ENCODE measurements at regions of chr19 and their contacts with region 1.

Region 1: DNA sequence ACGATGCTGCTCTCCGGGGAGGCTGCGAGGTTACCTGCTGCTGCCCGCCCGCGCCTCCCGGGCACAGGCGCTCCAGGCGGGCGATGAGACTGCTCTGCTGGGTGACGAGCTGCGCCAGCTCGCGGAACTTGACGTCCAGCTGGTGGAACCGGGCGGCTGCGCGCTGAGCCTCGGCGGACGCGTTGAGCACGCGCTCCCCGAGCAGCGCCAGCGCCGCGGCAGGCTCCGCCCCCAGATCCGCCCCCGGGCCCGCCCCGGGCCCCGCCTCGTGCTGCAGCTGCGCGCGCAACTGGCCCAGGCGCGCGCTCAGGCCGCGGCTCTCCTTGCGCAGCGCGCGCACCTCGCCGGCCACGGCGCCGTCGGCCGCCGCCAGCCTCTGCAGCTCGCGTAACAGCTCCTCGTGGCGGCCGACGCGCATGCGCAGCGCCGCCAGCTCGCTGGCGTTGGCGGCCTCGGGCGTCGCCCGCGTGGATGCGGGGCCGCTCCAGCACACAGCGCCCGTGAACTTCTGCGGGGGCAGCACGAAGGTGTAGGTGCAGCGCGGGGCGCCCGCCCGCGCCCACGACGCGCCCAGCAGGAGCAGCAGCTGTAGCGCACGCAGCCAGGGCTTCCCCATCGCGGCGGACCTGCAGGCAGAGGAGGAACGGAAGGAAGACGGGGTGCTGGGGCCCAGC is 6.4 kb downstream of the ANGPTL6 start:
- DNase-seq: peak; percentile 73
- H3K4me3 ChIP-seq: peak overlapping the region; percentile 36 to 57 (median 49)
- H3K27ac ChIP-seq: no peak overlapping the region
- H3K4me1 ChIP-seq: peaks cover 8% of the 10 kb centered on the region
- H3K27me3 ChIP-seq: no peaks in the 10 kb centered on the region
- CTCF ChIP-seq: no peak

Region 2: DNA sequence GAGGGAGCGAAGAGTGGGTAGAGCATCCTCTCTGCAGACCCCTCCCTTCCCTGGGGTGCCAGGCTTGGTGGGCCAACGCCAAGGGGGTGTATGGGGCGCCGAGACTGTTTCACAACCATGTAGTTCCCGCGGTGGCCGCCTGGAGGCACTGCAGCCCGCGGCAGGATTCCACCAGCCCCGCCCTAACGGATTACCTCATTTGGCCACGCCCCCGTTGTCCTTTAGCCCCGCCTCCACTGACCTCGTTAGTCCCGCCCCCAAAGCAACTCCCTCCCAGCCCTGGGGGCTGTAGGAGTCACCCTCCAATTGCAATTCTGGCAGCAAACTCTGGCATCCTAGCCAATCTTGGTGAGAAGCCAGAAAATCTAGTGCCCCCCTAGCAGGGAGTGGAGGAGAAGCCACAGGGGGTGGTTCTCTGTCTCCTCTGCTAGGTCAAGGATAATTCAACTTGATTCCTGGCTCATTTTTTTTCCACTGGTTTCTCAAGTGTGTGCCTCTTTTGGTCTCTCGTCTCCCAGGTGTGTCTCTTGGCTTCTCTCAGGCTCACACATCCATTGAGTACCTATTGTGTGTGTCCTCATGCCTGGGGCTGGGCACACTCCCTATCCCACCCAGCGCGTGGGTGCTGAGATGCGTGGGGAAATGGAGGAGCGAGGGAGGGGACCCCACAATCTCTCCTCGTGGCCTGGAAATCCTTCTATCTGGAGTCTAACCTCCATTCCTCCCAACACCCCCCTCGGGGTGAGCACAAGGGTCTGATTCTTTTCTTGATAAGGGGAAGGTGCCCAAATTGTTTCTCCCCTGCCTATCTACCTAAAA is 161.7 kb before region 1 on chr19:
- dilution Hi-C with region 1: loop called (anchors 25 kb)
- DNase-seq: no peak
- H3K4me3 ChIP-seq: no peak overlapping the region
- H3K27ac ChIP-seq: no peak overlapping the region
- H3K4me1 ChIP-seq: peaks cover 14% of the 10 kb centered on the region
- H3K27me3 ChIP-seq: peaks cover 27% of the 10 kb centered on the region
- CTCF ChIP-seq: peak; percentile 92 to 99 (median 99)

Measured in keratinocyte (primary cell).